ENCODE measurements at regions of chr19 and their contacts with region 1.

Region 1: GRCh38 chr19:7522072-7522922 is at the start of gene MCOLN1:
- DNase-seq: peak; percentile 99 to 100 (median 100)
- H3K4me3 ChIP-seq: peak within 1 kb of the TSS; percentile 4 to 79 (median 34)
- H3K27ac ChIP-seq: peak within 1 kb of the TSS in 4 of 5 donors; percentile 9 to 85 (median 72)
- H3K4me1 ChIP-seq: peaks cover 21 to 50% of the 10 kb centered on the region in 2 donors
- H3K27me3 ChIP-seq: no peaks in the 10 kb centered on the region
- CTCF ChIP-seq: peak in 1 of 6 experiments; percentile 23
- POLR2A ChIP-seq: peak in 1 of 2 donors; percentile 89
- total RNA-seq, gene MCOLN1: 6.0 to 100.0 (median 49.4) TPM

Region 2: DNA sequence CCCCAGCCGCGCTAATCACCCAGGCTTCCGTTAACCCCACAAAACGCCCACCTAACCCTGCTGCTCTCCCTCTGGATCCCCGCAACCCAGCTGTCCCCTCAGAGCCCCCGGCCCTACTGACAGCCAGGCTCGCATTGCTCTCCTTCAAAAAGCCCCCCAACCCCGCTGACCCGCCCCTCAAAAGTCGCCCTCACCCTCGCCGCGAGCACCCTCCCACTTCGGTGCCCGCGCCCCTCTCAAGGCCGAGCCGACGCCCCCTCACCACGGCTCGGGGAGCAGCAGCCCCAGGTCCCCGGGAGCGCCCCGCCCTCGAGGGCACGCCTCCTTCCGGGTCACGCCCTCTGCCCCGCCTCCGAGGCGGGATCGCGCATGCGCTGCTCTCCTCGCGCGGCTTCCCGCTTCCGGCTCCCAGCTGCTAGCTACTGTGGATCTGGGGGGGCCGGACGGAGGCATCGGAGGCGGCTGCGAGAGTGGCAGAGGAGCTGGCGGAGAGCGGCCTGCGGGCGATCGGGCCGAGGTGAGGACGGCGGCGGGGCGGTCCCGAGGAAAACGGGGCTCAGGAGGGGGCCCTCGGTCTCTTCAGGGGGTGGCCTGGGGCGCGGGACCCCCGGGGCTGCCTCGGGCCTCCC is 127.5 kb before region 1 on chr19:
- intact Hi-C with region 1: loop called in 1 of 2 experiments (anchors 10 kb)
- DNase-seq: peak; percentile 86 to 93 (median 90)
- H3K4me3 ChIP-seq: peak overlapping the region; percentile 86 to 97 (median 96)
- H3K27ac ChIP-seq: peak overlapping the region in 4 of 5 donors; percentile 45 to 84 (median 62)
- H3K4me1 ChIP-seq: peaks cover 25 to 33% of the 10 kb centered on the region in 2 donors
- H3K27me3 ChIP-seq: no peaks in the 10 kb centered on the region
- CTCF ChIP-seq: no peak
- POLR2A ChIP-seq: peak; percentile 31 to 73